Activated CD4-positive, alpha-beta memory T cell treated with anti-CD3 and anti-CD28 coated beads for 36 hours (primary cell): ENCODE measurements at regions of chr10 and their contacts with region 1.

Region 1: DNA sequence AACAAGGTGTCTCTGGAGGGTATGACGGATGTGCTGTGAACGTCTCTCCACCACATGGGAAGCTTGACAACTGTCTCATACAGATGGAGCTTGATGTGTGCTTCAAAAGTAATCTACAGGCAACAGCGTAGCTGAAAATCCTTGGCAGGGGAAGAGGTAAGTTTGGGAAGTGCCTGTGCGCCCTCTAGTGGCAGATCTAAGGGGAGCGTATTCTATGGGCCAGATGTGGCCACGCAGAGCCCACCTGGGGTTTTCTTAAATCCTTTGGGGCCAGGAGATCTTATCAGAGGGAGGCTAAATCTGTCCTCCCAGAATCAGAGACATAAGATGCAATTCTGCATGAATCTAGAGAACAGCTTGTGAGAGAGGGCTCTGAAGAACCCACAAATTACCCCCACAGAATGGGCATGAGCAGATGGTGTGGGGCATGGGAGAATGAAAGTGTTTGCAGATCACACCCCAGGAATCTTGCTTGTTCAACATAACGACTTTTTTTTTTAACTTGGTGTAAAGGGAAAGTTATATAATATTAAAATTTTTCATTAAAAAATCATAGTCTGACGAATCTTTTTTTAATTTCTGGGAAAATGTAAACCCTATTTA is 91.2 kb upstream of the MPP7 start:
- DNase-seq: peak; percentile 76
- H3K4me3 Mint-ChIP-seq: no peak overlapping the region
- H3K27ac Mint-ChIP-seq: no peak overlapping the region
- H3K4me1 Mint-ChIP-seq: peaks cover 3% of the 10 kb centered on the region
- H3K27me3 Mint-ChIP-seq: no peaks in the 10 kb centered on the region

Region 2: DNA sequence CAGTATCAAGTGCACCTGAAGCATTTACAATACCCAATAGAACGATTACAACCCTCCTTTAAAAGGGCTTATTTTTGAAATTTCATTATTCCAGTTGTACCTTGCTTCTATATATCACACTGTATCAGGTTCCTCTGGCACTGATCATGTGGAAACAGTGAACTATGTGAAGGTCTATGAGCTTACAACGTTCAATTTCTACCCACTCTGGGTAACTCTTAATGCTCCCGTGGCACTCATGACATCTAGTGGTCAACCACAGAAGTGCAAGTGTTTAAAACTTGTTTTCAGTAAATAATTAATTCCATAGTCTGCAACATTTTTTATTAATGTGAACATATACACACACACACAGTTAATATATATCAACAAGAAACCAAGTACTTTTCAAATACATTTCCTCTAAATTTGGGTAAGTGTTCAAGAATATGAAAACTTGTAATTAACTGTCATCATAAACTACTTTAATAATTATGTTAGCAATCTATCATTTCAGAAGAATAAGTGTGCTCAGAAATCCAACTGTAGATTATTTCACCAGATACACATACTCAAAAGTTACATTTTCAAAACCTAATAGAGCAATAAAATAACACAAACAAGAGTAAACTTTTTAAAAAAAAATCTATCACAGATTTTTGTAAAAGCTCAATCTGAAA is 152.2 kb before region 1 on chr10:
- CTCF ChIA-PET with region 1: interaction called, 19 read pairs
- POLR2A ChIA-PET with region 1: no interaction called
- intact Hi-C with region 1: no loop called
- DNase-seq: peak; percentile 37
- H3K4me3 Mint-ChIP-seq: no peak overlapping the region
- H3K27ac Mint-ChIP-seq: no peak overlapping the region
- H3K4me1 Mint-ChIP-seq: peaks cover 20% of the 10 kb centered on the region
- H3K27me3 Mint-ChIP-seq: no peaks in the 10 kb centered on the region

Region 3: DNA sequence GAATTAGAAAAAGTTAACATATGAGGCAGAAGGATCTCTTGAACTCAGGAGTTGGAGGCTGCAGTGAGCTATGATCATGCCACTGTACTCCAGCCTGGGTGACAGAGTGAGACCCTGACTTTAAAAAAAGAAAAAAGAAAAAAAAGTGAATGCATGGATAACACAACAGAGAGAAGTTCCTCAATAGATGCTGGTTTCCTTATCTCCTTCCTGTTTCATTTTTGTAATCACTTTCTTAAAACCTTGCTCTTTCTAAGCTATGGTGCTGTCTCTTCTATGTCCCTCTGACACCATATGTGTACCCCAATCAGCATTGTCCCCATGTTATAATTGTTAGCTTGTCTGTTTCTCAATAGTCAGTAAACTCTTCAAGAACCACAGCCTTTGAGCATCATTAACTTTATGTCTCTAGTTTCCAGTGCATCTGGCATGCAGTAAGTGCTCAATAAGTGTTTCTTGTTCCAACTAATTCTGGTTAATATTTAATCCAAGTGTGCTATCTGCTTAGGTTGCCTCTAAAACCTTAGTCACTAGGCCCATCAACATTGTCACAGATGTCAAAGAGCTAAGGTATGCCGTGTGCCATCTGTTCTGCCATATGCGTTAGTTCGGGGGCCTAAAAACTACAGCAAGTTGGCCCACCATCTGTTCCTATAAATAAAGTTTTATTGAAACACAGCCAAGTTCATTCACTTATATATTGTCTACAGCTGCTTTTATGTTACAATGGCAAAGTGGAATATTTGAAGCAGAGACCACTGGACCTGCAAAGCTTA is 127.4 kb before region 1 on chr10:
- CTCF ChIA-PET with region 1: interaction called, 12 read pairs
- POLR2A ChIA-PET with region 1: no interaction called
- intact Hi-C with region 1: no loop called
- DNase-seq: no peak
- H3K4me3 Mint-ChIP-seq: no peak overlapping the region
- H3K27ac Mint-ChIP-seq: no peak overlapping the region
- H3K4me1 Mint-ChIP-seq: peaks cover 4% of the 10 kb centered on the region
- H3K27me3 Mint-ChIP-seq: no peaks in the 10 kb centered on the region

Region 4: GRCh38 chr10:28302638-28303488 is 91.2 kb before region 1 on chr10 and contains the start of gene MPP7:
- CTCF ChIA-PET with region 1: interaction called, 24 read pairs
- POLR2A ChIA-PET with region 1: no interaction called
- intact Hi-C with region 1: no loop called
- DNase-seq: peak; percentile 97
- H3K4me3 Mint-ChIP-seq: peak within 1 kb of the TSS; percentile 90
- H3K27ac Mint-ChIP-seq: peak within 1 kb of the TSS; percentile 71
- H3K4me1 Mint-ChIP-seq: peaks cover 46% of the 10 kb centered on the region
- H3K27me3 Mint-ChIP-seq: no peaks in the 10 kb centered on the region
- total RNA-seq, gene MPP7: 11.6 to 12.8 TPM